ENCODE measurements at regions of chr1 and their contacts with region 1.

Region 1: GRCh38 chr1:26833432-26834405 is 7.2 kb downstream of the ZDHHC18 start:
- DNase-seq: peak; percentile 61 to 97 (median 93)
- ATAC-seq: peak; percentile 96 to 98 (median 96)
- H3K4me3 ChIP-seq: peak overlapping the region; percentile 32 to 56
- H3K4me3 Mint-ChIP-seq: peak overlapping the region; percentile 63 to 76 (median 72)
- H3K27ac ChIP-seq: peak overlapping the region; percentile 98
- H3K27ac Mint-ChIP-seq: peak overlapping the region; percentile 99
- H3K4me1 ChIP-seq: peaks cover 19 to 73% of the 10 kb centered on the region in 2 experiments
- H3K4me1 Mint-ChIP-seq: peaks cover 75 to 76% (median 75%) of the 10 kb centered on the region in 3 donors
- H3K27me3 ChIP-seq: no peaks in the 10 kb centered on the region
- H3K27me3 Mint-ChIP-seq: no peaks in the 10 kb centered on the region

Region 2: DNA sequence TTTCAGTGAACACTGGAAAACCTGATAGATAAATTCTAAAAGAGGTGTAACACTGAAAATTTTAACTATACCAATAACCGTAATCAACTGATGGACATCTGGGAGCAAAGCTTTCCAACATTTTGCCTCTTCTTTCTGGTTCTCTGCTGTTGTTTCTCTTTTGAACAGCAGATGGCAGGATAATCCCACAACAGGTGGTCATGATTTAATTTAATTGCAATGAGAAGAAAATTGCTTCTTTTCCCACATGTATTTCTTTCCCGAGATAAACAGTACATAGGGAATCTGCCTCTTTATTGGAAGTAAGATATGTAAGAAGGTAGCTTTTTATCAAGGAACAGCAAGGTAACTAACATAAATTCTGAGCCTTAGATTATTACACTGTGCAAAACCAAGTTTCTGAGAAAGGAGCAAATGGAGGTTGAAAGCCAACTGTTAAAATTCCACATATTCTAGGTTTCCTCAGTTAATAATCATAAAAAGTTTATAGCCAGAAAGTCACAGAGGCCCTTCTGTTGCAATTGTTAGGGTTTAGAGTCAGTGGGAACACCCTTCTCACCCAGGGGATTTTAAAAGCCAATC is 231.2 kb before region 1 on chr1:
- CTCF ChIA-PET with region 1: interaction called, 5 to 12 read pairs
- POLR2A ChIA-PET with region 1: no interaction called
- DNase-seq: peak in 18 of 35 experiments; percentile 5 to 83 (median 22)
- ATAC-seq: peak in 2 of 4 experiments; percentile 48 to 55
- H3K4me3 ChIP-seq: no peak overlapping the region
- H3K4me3 Mint-ChIP-seq: no peak overlapping the region
- H3K27ac ChIP-seq: no peak overlapping the region
- H3K27ac Mint-ChIP-seq: no peak overlapping the region
- H3K4me1 ChIP-seq: peaks cover 0 to 5% of the 10 kb centered on the region in 2 experiments
- H3K4me1 Mint-ChIP-seq: peaks cover 4 to 9% (median 8%) of the 10 kb centered on the region in 3 donors
- H3K27me3 ChIP-seq: peaks cover 0 to 2% of the 10 kb centered on the region in 2 experiments
- H3K27me3 Mint-ChIP-seq: peaks cover 0 to 1% of the 10 kb centered on the region in 2 donors

Region 3: GRCh38 chr1:26761217-26761616 is 72.5 kb before region 1 on chr1:
- CTCF ChIA-PET with region 1: no interaction called
- POLR2A ChIA-PET with region 1: no interaction called
- DNase-seq: peak in 1 of 35 experiments; percentile 17
- ATAC-seq: no peak
- H3K4me3 ChIP-seq: no peak overlapping the region
- H3K4me3 Mint-ChIP-seq: no peak overlapping the region
- H3K27ac ChIP-seq: no peak overlapping the region
- H3K27ac Mint-ChIP-seq: peak overlapping the region in 1 of 2 donors; percentile 54
- H3K4me1 ChIP-seq: peaks cover 0 to 9% of the 10 kb centered on the region in 2 experiments
- H3K4me1 Mint-ChIP-seq: peaks cover 23 to 31% (median 30%) of the 10 kb centered on the region in 3 donors
- H3K27me3 ChIP-seq: no peaks in the 10 kb centered on the region
- H3K27me3 Mint-ChIP-seq: no peaks in the 10 kb centered on the region

Region 4: DNA sequence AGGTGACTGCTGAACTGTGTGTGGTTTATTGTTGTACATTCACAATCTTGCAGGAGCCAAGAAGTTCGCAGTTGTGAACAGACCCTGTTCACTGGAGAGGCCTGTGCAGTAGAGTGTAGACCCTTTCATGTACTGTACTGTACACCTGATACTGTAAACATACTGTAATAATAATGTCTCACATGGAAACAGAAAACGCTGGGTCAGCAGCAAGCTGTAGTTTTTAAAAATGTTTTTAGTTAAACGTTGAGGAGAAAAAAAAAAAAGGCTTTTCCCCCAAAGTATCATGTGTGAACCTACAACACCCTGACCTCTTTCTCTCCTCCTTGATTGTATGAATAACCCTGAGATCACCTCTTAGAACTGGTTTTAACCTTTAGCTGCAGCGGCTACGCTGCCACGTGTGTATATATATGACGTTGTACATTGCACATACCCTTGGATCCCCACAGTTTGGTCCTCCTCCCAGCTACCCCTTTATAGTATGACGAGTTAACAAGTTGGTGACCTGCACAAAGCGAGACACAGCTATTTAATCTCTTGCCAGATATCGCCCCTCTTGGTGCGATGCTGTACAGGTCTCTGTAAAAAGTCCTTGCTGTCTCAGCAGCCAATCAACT is 52.4 kb before region 1 on chr1:
- CTCF ChIA-PET with region 1: interaction called in 1 of 2 experiments, 48 read pairs
- POLR2A ChIA-PET with region 1: interaction called in 1 of 2 experiments, 14 read pairs
- DNase-seq: no peak
- ATAC-seq: no peak
- H3K4me3 ChIP-seq: no peak overlapping the region
- H3K4me3 Mint-ChIP-seq: no peak overlapping the region
- H3K27ac ChIP-seq: no peak overlapping the region
- H3K27ac Mint-ChIP-seq: peak overlapping the region; percentile 61 to 99
- H3K4me1 ChIP-seq: peaks cover 10 to 24% of the 10 kb centered on the region in 2 experiments
- H3K4me1 Mint-ChIP-seq: peaks cover 47 to 61% (median 60%) of the 10 kb centered on the region in 3 donors
- H3K27me3 ChIP-seq: no peaks in the 10 kb centered on the region
- H3K27me3 Mint-ChIP-seq: no peaks in the 10 kb centered on the region

Region 5: GRCh38 chr1:26799479-26800142 is 34.1 kb before region 1 on chr1:
- CTCF ChIA-PET with region 1: interaction called, 4 to 17 read pairs
- POLR2A ChIA-PET with region 1: interaction called in 1 of 2 experiments, 3 read pairs
- DNase-seq: peak in 2 of 35 experiments; percentile 13 to 41
- ATAC-seq: peak; percentile 60 to 66 (median 66)
- H3K4me3 ChIP-seq: no peak overlapping the region
- H3K4me3 Mint-ChIP-seq: peak overlapping the region; percentile 49 to 72 (median 63)
- H3K27ac ChIP-seq: peak overlapping the region; percentile 82
- H3K27ac Mint-ChIP-seq: peak overlapping the region; percentile 96 to 97
- H3K4me1 ChIP-seq: peaks cover 13 to 33% of the 10 kb centered on the region in 2 experiments
- H3K4me1 Mint-ChIP-seq: peaks cover 33 to 36% (median 35%) of the 10 kb centered on the region in 3 donors
- H3K27me3 ChIP-seq: no peaks in the 10 kb centered on the region
- H3K27me3 Mint-ChIP-seq: no peaks in the 10 kb centered on the region

Region 6: GRCh38 chr1:26820784-26821269 is 12.9 kb before region 1 on chr1:
- CTCF ChIA-PET with region 1: interaction called, 5 to 92 read pairs
- POLR2A ChIA-PET with region 1: interaction called, 5 to 12 read pairs
- DNase-seq: peak in 14 of 35 experiments; percentile 8 to 72 (median 32)
- ATAC-seq: peak; percentile 95 to 97 (median 96)
- H3K4me3 ChIP-seq: peak overlapping the region; percentile 30 to 47
- H3K4me3 Mint-ChIP-seq: peak overlapping the region; percentile 61 to 69 (median 67)
- H3K27ac ChIP-seq: peak overlapping the region; percentile 60
- H3K27ac Mint-ChIP-seq: peak overlapping the region; percentile 89 to 96
- H3K4me1 ChIP-seq: peaks cover 8 to 28% of the 10 kb centered on the region in 2 experiments
- H3K4me1 Mint-ChIP-seq: peaks cover 24 to 35% (median 25%) of the 10 kb centered on the region in 3 donors
- H3K27me3 ChIP-seq: no peaks in the 10 kb centered on the region
- H3K27me3 Mint-ChIP-seq: no peaks in the 10 kb centered on the region

Measured in T-cell (primary cell).